ENCODE measurements at regions of chr9 and their contacts with region 1.

Region 1: DNA sequence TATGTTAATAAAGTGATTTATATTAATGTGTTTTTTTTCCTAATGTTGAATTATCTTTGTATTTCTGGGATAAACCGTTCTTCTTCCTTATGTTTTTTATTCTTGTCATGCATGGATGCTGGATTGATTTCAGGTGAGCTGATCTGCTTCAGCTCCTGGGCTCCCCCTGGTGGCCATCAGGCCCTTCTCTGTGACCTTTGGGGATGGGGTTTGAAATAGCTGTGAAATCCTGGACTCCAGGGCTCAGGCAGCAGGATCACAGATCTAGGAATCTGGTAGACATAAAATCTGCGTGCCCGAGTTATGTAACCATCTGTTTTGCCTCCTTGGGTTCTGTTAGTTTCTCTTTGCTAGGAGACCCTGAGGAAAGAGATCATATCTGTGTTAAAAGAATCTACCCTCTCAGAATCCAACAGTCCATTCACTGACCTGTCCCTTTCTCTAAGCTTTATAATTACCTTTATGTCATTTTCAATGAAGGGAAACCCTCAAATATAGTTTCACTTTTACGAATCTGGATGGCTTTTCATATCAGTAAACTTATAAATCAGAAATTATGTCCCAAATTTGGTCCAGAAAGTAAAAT is 12.2 kb upstream of the OR13J1 start:
- DNase-seq: no peak
- H3K4me3 ChIP-seq: no peak overlapping the region
- CTCF ChIP-seq: peak; percentile 93

Region 2: GRCh38 chr9:35726881-35727438 is 155.4 kb before region 1 on chr9:
- CTCF ChIA-PET with region 1: no interaction called
- POLR2A ChIA-PET with region 1: no interaction called
- DNase-seq: no peak
- H3K4me3 ChIP-seq: peak overlapping the region; percentile 87
- CTCF ChIP-seq: peak; percentile 36

Region 3: GRCh38 chr9:35814841-35815543 is 67.4 kb before region 1 on chr9 and contains the start of gene HINT2:
- CTCF ChIA-PET with region 1: interaction called, 31 read pairs
- POLR2A ChIA-PET with region 1: no interaction called
- DNase-seq: peak; percentile 94
- H3K4me3 ChIP-seq: peak within 1 kb of the TSS; percentile 87
- CTCF ChIP-seq: no peak

Region 4: DNA sequence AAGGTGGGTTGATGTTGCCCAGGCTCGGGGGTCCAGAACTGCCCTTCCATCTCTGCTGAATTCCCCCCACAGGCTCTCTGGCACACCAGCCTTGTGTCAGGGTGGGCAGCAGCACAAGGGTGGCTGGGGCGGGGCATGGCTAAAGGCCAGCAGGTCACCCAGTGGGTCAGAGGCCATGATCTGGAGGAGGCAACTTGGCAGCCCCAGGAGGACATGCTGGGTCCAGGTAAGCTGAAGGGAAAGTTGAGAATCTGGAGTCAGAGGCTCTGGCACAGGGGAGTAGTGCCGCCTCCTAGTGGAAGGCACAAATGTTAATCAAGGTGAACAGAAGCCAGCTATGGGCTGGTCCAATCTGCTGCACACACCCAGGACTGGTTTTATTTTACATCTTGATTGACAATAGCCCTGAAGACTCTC is 47.1 kb before region 1 on chr9:
- CTCF ChIA-PET with region 1: interaction called, 13 read pairs
- POLR2A ChIA-PET with region 1: no interaction called
- DNase-seq: no peak
- H3K4me3 ChIP-seq: no peak overlapping the region
- CTCF ChIP-seq: no peak

Region 5: GRCh38 chr9:35852876-35853865 is 29.2 kb before region 1 on chr9:
- CTCF ChIA-PET with region 1: interaction called, 16 read pairs
- POLR2A ChIA-PET with region 1: no interaction called
- DNase-seq: no peak
- H3K4me3 ChIP-seq: no peak overlapping the region
- CTCF ChIP-seq: no peak

Region 6: DNA sequence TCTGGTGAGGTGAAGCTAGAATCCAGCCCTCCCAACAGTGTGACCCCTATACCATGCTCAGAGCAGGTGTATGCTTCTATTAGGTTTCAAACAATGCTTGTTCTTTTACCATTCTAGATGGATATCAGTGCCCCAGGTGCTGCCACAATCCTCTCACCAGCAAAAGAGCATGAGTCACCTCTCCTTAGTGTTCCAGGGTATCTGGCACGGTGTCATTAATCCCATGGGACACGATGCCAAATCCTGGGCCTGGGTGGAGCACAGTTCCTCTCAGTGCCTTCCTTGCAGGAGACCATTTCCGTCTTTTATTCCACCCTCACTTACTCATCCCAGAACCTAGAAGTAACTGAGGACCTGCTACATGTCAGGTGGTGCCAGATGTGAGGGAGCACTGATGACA is 10.9 kb before region 1 on chr9:
- CTCF ChIA-PET with region 1: interaction called, 33 read pairs
- POLR2A ChIA-PET with region 1: no interaction called
- DNase-seq: no peak
- H3K4me3 ChIP-seq: no peak overlapping the region
- CTCF ChIP-seq: no peak

Region 7: GRCh38 chr9:35910613-35911359 is 28.4 kb after region 1 on chr9:
- CTCF ChIA-PET with region 1: interaction called, 21 read pairs
- POLR2A ChIA-PET with region 1: no interaction called
- DNase-seq: no peak
- H3K4me3 ChIP-seq: no peak overlapping the region
- CTCF ChIP-seq: peak; percentile 41

Region 8: DNA sequence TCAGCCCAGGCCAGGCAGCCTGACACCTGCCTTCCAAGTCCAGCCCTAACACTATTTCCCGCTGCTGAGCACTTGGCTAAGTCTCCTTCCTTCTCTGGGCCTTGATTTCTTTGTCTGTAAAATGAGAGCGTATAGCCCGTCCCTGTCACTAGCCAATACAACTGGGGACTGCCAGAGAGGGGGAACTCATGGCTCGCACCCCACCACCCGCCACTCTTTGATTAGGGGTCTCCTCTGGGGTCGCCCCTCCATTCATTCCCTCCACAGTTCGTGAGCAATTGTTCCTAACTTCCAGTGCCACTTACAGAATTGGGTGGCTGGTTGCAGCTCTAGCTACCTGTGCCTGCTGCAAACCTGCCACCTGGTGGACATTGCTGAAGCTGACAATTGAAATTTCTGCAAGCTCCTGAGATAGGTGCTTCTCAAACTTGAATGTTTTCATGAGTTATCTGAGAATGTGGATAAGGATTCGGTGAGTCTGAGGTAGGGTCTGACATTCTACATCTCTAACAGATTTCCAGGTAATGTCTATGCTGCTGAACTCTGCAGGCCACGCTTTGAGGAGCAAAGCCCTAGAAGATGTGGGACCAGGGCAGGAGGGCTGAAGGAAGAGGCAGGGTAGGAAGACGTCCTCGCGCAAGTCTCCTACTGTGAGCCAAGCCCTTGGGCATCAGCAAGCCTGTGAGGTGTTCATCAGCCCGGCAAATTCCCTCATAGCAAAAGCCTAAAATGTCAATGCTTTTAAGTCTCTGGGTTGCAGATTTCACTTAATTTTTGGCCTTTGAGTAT is 141.1 kb after region 1 on chr9:
- CTCF ChIA-PET with region 1: interaction called, 12 read pairs
- POLR2A ChIA-PET with region 1: no interaction called
- DNase-seq: no peak
- H3K4me3 ChIP-seq: no peak overlapping the region
- CTCF ChIP-seq: peak; percentile 81

Measured in AG04449 (cell line).